ENCODE measurements at regions of chr2 and their contacts with region 1.

Region 1: DNA sequence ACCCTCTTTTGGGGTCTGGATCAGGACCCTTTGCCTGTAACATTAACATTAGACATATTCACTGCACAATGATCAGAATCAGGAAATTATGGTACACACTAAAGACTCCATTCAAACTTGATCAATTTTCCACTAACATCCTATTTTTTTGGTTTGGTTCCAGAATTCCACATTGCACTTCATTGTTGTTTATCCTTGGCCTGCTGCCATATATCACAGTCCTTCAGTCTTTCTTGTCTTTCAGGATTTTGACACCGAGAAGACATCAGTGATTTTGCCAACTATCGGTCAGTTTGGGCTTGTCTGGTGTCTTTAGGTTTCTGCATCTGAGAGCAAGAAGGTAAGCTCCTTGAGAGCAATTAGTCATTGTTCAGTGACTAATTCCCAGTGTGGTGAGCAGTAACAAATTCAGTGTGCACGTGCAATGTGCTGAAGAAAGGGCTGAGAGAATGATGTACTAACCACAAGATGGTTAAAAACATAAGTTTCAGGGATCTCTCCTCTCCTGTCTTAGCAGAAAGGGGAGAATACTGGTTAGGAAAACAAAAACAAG is 23.5 kb downstream of the MARCHF4 start:
- DNase-seq: no peak
- H3K4me3 ChIP-seq: no peak overlapping the region
- H3K27ac ChIP-seq: no peak overlapping the region
- H3K4me1 ChIP-seq: no peaks in the 10 kb centered on the region
- H3K27me3 ChIP-seq: no peaks in the 10 kb centered on the region
- CTCF ChIP-seq: no peak
- EP300 ChIP-seq: no peak
- POLR2A ChIP-seq: no peak

Region 2: GRCh38 chr2:215156453-215156852 is 1192.4 kb before region 1 on chr2:
- in situ Hi-C with region 1: no loop called
- intact Hi-C with region 1: loop called (anchors 5 kb)
- DNase-seq: no peak
- H3K4me3 ChIP-seq: no peak overlapping the region
- H3K27ac ChIP-seq: no peak overlapping the region
- H3K4me1 ChIP-seq: no peaks in the 10 kb centered on the region
- H3K27me3 ChIP-seq: no peaks in the 10 kb centered on the region
- CTCF ChIP-seq: no peak
- EP300 ChIP-seq: no peak
- POLR2A ChIP-seq: no peak